K562 (cell line): ENCODE measurements at regions of chr3 and their contacts with region 1.

Region 1: DNA sequence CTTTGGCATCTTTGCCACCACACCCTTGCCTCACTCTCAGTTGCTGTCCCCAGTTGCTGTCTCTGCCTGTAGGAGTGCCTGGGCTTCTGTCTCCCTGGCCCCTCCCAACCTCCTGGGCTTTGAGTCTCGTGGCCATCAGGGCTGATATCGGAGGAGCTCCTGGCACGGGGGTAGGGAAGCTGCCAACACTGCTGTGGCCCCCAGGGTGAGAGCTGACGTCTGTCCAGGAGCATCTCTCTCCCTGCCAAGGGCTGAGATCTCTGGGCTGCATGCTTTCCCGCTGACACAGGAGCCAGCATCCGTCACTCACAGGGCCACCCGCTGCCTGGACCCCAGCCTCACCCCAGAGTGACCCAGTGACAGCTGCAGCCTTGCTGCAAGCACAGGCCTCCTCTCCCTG is 47.4 kb downstream of the EXOG start:
- DNase-seq: no peak
- ATAC-seq: no peak
- H3K4me3 ChIP-seq: no peak overlapping the region
- H3K27ac ChIP-seq: no peak overlapping the region
- H3K4me1 ChIP-seq: peaks cover 0 to 8% of the 10 kb centered on the region in 2 experiments; a peak in 2 of 5 replicates
- H3K27me3 ChIP-seq: peaks cover 39 to 65% of the 10 kb centered on the region in 2 experiments
- CTCF ChIP-seq: no peak
- EP300 ChIP-seq: no peak
- POLR2A ChIP-seq: no peak
- RAD21 ChIP-seq: no peak

Region 2: GRCh38 chr3:38131621-38132369 is 411.8 kb before region 1 on chr3:
- CTCF ChIA-PET with region 1: no interaction called
- POLR2A ChIA-PET with region 1: no interaction called
- in situ Hi-C with region 1: no loop called
- intact Hi-C with region 1: no loop called
- DNase-seq: peak; percentile 69 to 82 (median 70)
- ATAC-seq: peak; percentile 87
- H3K4me3 ChIP-seq: no peak overlapping the region
- H3K27ac ChIP-seq: no peak overlapping the region
- H3K4me1 ChIP-seq: peaks cover 4 to 6% of the 10 kb centered on the region in 2 experiments; a peak in 2 of 5 replicates
- H3K27me3 ChIP-seq: no peaks in the 10 kb centered on the region
- CTCF ChIP-seq: peak; percentile 88 to 96 (median 92)
- EP300 ChIP-seq: 0 out of 2 replicates have a peak, but pooled peaks have one; percentile 8
- POLR2A ChIP-seq: no peak
- RAD21 ChIP-seq: peak; percentile 73 to 86

Region 3: GRCh38 chr3:38368238-38368637 is 175.3 kb before region 1 on chr3:
- CTCF ChIA-PET with region 1: no interaction called
- POLR2A ChIA-PET with region 1: no interaction called
- in situ Hi-C with region 1: no loop called
- intact Hi-C with region 1: no loop called
- DNase-seq: no peak
- ATAC-seq: no peak; the same call in 2 of the 3 replicates
- H3K4me3 ChIP-seq: no peak overlapping the region
- H3K27ac ChIP-seq: no peak overlapping the region
- H3K4me1 ChIP-seq: peaks cover 0 to 5% of the 10 kb centered on the region in 2 experiments; a peak in 1 of 5 replicates
- H3K27me3 ChIP-seq: no peaks in the 10 kb centered on the region
- CTCF ChIP-seq: no peak
- EP300 ChIP-seq: no peak
- POLR2A ChIP-seq: no peak
- RAD21 ChIP-seq: no peak

Region 4: GRCh38 chr3:38554127-38554827 is 10.7 kb after region 1 on chr3:
- CTCF ChIA-PET with region 1: no interaction called
- POLR2A ChIA-PET with region 1: interaction called, 15 read pairs
- in situ Hi-C with region 1: no loop called
- intact Hi-C with region 1: no loop called
- DNase-seq: no peak
- ATAC-seq: no peak
- H3K4me3 ChIP-seq: no peak overlapping the region
- H3K27ac ChIP-seq: no peak overlapping the region
- H3K4me1 ChIP-seq: no peaks in the 10 kb centered on the region
- H3K27me3 ChIP-seq: peaks cover 30 to 43% of the 10 kb centered on the region in 2 experiments
- CTCF ChIP-seq: no peak
- EP300 ChIP-seq: no peak
- POLR2A ChIP-seq: no peak
- RAD21 ChIP-seq: no peak